Endothelial cell of umbilical vein (primary cell): ENCODE measurements at regions of chr2 and their contacts with region 1.

Region 1: DNA sequence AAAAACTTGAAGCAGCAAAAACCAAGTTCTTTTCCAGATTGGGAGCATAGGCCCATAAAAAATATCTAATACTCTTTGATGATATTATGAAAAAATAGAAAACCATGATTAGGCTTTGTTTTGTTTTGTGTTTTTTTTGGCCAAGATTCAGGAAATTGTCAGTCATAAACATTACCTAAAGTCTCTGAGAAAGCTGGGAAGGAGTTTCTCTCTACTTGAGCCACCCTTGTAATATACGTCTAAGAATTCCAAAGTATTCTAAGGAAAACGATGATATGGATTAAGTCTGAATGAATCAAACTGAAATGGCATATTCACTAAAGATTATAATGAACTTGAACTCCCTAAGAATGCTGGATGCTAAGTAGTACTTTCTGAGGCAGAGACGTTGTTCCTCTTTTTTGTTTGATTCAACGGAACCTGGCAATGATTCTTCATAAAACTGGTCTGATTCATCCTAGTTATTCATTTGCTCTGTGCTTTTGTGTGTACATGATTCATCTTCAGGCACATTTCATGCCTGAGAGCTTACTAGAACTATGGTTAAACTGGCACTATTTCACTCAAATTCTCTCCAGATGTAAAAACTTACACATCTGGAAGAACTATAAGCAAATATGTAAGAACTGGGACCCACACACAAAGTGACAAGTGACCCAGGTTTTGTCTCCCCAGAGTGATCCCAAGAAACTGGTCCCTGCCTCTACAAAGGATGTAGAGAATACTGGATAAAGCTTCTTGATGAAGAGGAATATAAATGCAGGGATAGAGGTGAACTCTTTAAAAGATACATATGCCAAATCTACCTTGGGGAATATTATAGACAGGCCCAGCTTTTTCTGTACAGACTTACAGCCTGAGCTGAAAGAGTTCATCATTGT is 159.7 kb downstream of the DOCK10 start:
- DNase-seq: peak; percentile 82
- H3K4me3 ChIP-seq: no peak overlapping the region
- H3K27ac ChIP-seq: peak overlapping the region; percentile 81
- H3K4me1 ChIP-seq: peaks cover 28% of the 10 kb centered on the region
- H3K27me3 ChIP-seq: no peaks in the 10 kb centered on the region
- CTCF ChIP-seq: no peak
- POLR2A ChIP-seq: no peak

Region 2: DNA sequence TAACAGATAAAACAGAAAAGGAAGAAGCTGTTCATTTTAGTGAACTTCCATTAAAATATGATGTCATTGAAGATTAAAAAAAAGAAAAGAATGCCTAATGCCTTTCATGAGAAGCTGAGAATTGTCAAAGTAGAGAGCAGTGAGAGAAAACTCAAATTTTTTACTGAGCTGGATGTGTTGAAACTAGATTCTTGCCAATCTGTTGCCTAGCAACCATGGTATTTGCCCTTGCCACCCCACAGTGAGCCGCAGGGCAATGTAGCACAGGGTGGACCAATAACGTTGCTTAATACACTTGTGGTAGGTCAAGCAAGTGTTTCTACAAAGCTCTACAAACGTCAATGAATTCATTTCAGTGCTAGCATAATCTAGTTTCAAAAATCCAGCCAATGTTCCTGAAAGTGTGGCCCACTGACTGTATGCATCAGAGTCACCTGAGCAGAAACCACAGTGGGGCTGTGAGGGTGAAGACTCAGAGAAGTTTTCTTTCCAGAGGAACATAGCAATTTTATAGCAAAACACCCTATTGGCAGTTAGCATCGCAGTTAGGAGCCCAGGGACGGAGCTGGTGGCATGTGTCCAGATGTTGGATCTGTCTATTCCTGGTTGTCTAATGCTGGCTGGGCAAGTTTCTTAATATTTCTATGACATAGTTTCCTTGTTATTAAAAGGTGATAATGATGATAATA is 27.5 kb after region 1 on chr2:
- CTCF ChIA-PET with region 1: interaction called, 11 read pairs
- POLR2A ChIA-PET with region 1: no interaction called
- dilution Hi-C with region 1: no loop called
- intact Hi-C with region 1: no loop called
- DNase-seq: peak; percentile 49
- H3K4me3 ChIP-seq: no peak overlapping the region
- H3K27ac ChIP-seq: peak overlapping the region; percentile 13
- H3K4me1 ChIP-seq: peaks cover 13% of the 10 kb centered on the region
- H3K27me3 ChIP-seq: no peaks in the 10 kb centered on the region
- CTCF ChIP-seq: no peak
- POLR2A ChIP-seq: no peak

Region 3: GRCh38 chr2:224938651-224939182 is 56.2 kb after region 1 on chr2:
- CTCF ChIA-PET with region 1: no interaction called
- POLR2A ChIA-PET with region 1: no interaction called
- dilution Hi-C with region 1: no loop called
- intact Hi-C with region 1: loop called (anchors 2 kb)
- DNase-seq: peak; percentile 94
- H3K4me3 ChIP-seq: peak overlapping the region in 1 of 3 experiments; percentile 4
- H3K27ac ChIP-seq: peak overlapping the region; percentile 47
- H3K4me1 ChIP-seq: peaks cover 44% of the 10 kb centered on the region
- H3K27me3 ChIP-seq: no peaks in the 10 kb centered on the region
- CTCF ChIP-seq: no peak
- POLR2A ChIP-seq: no peak

Region 4: GRCh38 chr2:224946895-224947294 is 64.4 kb after region 1 on chr2:
- CTCF ChIA-PET with region 1: no interaction called
- POLR2A ChIA-PET with region 1: no interaction called
- dilution Hi-C with region 1: no loop called
- intact Hi-C with region 1: loop called (anchors 1 kb)
- DNase-seq: peak; percentile 84
- H3K4me3 ChIP-seq: peak overlapping the region; percentile 13 to 95 (median 93)
- H3K27ac ChIP-seq: peak overlapping the region; percentile 99
- H3K4me1 ChIP-seq: peaks cover 61% of the 10 kb centered on the region
- H3K27me3 ChIP-seq: no peaks in the 10 kb centered on the region
- CTCF ChIP-seq: no peak
- POLR2A ChIP-seq: peak; percentile 71

Region 5: GRCh38 chr2:225041851-225042799 is 159.6 kb after region 1 on chr2 and contains the start of gene DOCK10:
- CTCF ChIA-PET with region 1: no interaction called
- POLR2A ChIA-PET with region 1: no interaction called
- dilution Hi-C with region 1: no loop called
- intact Hi-C with region 1: no loop called
- DNase-seq: peak; percentile 17
- H3K4me3 ChIP-seq: peak within 1 kb of the TSS; percentile 11 to 50 (median 31)
- H3K27ac ChIP-seq: no peak within 1 kb of the TSS
- H3K4me1 ChIP-seq: peaks cover 6% of the 10 kb centered on the region
- H3K27me3 ChIP-seq: peaks cover 26 to 40% of the 10 kb centered on the region in 2 experiments
- CTCF ChIP-seq: no peak
- POLR2A ChIP-seq: no peak
- total RNA-seq, gene DOCK10: 19.4 and 23.0 TPM in 2 replicates